ENCODE measurements at regions of chr4 and their contacts with region 1.

Region 1: DNA sequence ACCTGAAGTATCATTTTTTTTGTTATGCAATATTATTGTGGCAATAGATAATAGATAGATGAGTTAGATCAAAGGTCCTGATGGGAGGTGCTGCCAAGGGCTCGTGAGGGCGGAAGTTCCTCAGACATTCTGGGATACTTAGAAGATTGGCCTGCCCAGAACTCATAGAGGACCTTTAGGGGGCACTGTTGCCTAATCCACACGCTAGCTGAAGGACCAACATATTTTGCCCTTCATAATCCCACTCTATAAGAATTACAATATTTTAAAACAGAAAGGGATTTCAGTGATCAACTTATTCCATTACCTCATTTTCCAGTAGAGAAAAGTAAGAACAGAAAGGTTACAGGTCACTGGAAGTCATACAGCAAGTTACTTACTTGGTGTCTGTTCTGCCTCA is 22.9 kb upstream of the COX7B2 start:
- ATAC-seq: peak in 4 of 8 experiments; percentile 65 to 94 (median 88)
- H3K4me3 ChIP-seq: no peak overlapping the region
- H3K27ac ChIP-seq: no peak overlapping the region
- H3K4me1 ChIP-seq: no peaks in the 10 kb centered on the region

Region 2: DNA sequence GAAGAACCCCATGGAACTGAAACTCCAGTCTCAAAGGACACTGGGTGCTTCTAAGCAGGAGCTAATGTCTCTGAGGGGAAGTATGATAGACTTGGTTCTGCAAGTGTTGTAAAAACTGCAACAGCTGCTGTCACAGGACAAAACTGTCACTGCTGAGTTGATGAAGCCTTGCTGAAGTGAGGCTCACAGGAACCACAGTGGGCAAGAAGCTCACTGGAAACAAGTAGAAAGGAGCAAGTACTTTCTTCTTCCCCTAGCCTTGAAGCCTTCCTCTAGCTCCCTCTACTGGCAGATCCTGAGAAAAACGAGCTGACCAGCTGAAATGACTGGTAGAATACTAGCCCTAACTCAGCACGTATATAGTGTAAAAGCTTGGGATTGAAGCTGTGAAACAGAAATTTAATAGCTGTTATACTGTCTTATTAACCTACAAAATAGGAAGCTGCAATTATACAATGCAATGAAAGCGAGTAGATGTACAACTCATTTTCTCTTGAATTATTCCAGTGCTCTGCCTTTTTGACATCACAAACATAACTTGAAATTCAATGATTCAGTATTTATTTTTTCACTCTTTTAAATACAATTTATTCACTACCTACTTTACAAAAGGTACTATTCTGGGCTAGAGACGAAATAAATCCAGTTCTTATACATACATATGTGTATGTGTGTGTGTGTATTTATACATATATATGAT is 190.8 kb after region 1 on chr4:
- in situ Hi-C with region 1: loop called in 1 of 9 experiments (anchors 25 kb)
- ATAC-seq: peak; percentile 61 to 93 (median 78)
- H3K4me3 ChIP-seq: no peak overlapping the region
- H3K27ac ChIP-seq: no peak overlapping the region
- H3K4me1 ChIP-seq: no peaks in the 10 kb centered on the region

Region 3: DNA sequence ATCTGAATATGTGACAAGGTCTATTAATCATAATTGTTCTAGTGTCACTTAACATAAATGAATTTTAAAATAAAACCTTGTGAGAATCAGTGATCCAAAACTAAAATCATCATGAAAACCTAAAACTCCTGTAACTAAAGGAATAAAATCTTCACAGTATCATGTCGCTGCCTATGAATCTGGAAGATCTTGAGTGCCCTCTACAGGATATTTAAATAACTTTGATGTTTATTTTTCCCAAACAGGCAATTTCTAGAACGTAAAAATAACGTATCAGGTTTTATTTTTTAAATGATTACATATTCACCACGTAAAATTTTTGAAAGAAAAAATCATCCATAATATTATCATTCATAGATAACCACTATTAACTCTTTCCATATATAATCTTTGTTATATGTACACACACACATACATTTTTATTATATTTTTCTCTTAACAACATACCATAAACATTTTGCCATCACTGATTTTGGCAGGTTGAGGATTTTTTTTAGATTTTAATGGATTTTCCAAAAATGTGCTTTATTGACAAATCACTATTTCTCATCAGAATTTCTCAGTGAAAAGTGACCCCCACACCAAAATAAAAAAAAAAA is 451.9 kb after region 1 on chr4:
- in situ Hi-C with region 1: loop called in 1 of 9 experiments (anchors 25 kb)
- ATAC-seq: peak in 1 of 8 experiments; percentile 36
- H3K4me3 ChIP-seq: no peak overlapping the region
- H3K27ac ChIP-seq: no peak overlapping the region
- H3K4me1 ChIP-seq: peaks cover 6 to 24% of the 10 kb centered on the region in 2 donors

Measured in motor neuron (in vitro differentiated cells).